ENCODE measurements at regions of chr13 and their contacts with region 1.

Region 1: GRCh38 chr13:33723772-33724435 is 94.0 kb upstream of the RFC3 start:
- DNase-seq: peak; percentile 84
- H3K4me3 ChIP-seq: no peak overlapping the region
- H3K27ac ChIP-seq: peak overlapping the region; percentile 30 to 32
- H3K4me1 ChIP-seq: no peaks in the 10 kb centered on the region
- H3K27me3 ChIP-seq: no peaks in the 10 kb centered on the region
- CTCF ChIP-seq: peak; percentile 46 to 82 (median 72)
- POLR2A ChIP-seq: no peak

Region 2: GRCh38 chr13:32586080-32586900 is 1137.6 kb before region 1 on chr13 and contains the start of gene PDS5B:
- intact Hi-C with region 1: loop called (anchors 5 kb)
- DNase-seq: peak; percentile 95
- H3K4me3 ChIP-seq: peak within 1 kb of the TSS; percentile 76 to 85
- H3K27ac ChIP-seq: peak within 1 kb of the TSS; percentile 95 to 97
- H3K4me1 ChIP-seq: no peaks in the 10 kb centered on the region
- H3K27me3 ChIP-seq: no peaks in the 10 kb centered on the region
- CTCF ChIP-seq: peak; percentile 95 to 99 (median 98)
- POLR2A ChIP-seq: peak; percentile 66
- total RNA-seq, gene PDS5B: 37.0 to 63.3 TPM

Region 3: DNA sequence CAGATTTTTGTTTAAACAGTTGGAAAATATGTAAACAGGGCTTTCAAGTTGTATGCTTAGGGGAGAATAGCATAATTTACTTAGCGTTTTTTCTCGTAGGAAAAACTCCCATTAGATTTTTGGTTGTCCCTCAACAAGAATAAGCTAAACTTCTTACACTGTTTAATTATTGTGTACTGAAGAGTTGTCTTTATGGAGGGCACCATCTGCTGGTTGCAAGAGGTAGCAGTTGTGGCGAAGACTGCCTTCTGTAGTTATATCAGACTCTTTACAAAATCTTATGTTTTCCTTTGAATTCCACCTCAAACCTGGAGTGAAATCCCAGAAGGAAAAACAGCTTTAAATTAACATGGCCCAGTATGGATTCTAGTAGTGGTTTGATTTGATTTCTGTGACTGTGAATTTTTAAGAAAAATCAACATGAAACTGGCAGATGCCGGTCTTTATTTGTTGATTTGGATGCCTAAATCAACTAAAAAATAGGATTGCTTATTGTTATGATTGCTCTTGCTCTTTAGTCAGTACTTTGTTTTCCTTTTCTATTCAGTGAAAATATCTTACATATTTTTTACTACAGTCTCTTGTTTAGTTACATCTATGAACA is 1084.3 kb before region 1 on chr13:
- intact Hi-C with region 1: loop called (anchors 10 kb)
- DNase-seq: peak; percentile 55
- H3K4me3 ChIP-seq: no peak overlapping the region
- H3K27ac ChIP-seq: no peak overlapping the region
- H3K4me1 ChIP-seq: no peaks in the 10 kb centered on the region
- H3K27me3 ChIP-seq: no peaks in the 10 kb centered on the region
- CTCF ChIP-seq: peak in 3 of 4 experiments; percentile 70 to 74 (median 72)
- POLR2A ChIP-seq: no peak

Region 4: DNA sequence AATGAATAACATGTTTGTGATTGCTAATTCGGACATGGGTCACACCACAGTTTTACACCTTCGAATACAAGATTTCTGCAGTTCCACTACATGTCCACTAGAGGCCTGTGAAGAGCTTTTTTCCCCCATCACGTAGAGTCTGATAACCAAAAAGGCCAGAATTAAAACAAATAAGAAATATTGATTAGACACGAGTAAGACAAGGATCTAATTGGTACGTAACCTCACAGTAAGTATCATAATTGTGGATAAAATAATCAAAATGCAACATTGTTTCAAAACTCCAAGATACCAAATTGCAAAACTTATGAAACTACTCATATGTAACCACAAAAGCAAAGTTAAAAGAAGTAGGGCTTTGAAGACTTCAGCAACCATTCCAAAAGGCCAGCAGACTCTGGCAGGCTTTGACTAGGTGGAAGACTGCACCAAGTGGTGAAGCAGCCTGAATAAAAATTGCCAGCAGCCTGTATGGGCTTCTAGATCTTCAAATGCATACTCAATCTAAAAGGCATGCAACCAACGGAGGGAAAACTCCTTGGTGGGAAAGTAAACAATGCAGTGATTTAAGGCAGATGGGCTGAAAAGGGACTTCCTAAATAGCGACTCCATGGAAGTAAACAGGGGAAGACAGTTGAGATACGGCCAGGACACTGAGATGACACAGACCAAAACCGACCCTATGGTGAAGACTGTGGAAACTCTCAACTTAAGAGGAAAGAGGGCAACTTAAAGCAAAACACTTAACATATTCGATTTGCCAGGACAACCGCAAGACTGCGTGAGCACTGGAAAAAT is 495.1 kb before region 1 on chr13:
- intact Hi-C with region 1: loop called (anchors 5 kb)
- DNase-seq: no peak
- H3K4me3 ChIP-seq: no peak overlapping the region
- H3K27ac ChIP-seq: peak overlapping the region; percentile 49 to 66
- H3K4me1 ChIP-seq: peaks cover 6% of the 10 kb centered on the region
- H3K27me3 ChIP-seq: no peaks in the 10 kb centered on the region
- CTCF ChIP-seq: peak; percentile 71 to 83 (median 80)
- POLR2A ChIP-seq: no peak

Region 5: GRCh38 chr13:33285420-33286124 is 438.3 kb before region 1 on chr13 and contains the start of gene STARD13:
- intact Hi-C with region 1: loop called (anchors 10 kb)
- DNase-seq: peak; percentile 94
- H3K4me3 ChIP-seq: peak within 1 kb of the TSS; percentile 52 to 60
- H3K27ac ChIP-seq: peak within 1 kb of the TSS; percentile 89 to 91
- H3K4me1 ChIP-seq: no peaks in the 10 kb centered on the region
- H3K27me3 ChIP-seq: no peaks in the 10 kb centered on the region
- CTCF ChIP-seq: peak in 3 of 4 experiments; percentile 16 to 72 (median 59)
- POLR2A ChIP-seq: peak; percentile 82
- total RNA-seq, gene STARD13: 27.4 to 31.1 TPM

Region 6: DNA sequence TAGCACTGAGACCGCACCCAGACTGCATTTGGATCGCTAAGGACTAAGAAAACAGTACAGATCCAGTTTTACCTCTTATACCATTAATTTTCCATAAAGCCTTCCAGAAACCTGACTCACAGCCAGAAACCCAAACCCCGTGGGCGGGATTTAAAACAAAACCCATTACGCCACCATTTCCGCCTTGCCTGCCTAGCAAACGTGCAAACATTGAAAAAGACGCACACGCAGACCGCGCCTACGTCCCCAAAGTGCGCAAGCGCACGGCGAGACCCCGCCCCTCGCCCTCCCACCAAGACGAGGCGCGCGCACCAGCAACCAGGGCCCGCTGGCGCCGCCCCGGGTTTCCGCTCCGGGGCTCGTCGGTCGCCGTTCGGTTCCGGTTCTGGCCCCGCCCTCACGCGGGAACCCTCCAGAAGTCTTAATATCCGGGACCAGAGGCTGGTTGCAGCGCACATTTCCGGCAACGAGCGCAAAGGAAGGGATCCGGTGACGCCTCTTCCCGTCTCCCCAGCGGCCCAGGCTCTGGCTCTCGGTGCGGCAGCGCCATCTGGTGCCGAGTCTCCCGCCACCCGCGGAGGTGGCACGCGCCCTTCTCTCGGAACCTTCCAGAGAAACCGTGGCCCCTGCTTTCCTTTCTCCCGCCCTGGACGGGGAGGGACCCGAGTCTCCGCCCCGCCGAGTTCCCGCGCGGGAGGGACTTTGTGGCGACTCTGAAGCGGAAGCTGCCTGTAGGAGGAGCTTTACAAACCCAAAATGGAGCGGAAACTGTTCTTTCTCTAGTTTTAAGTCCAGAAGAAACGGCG is 181.4 kb before region 1 on chr13:
- intact Hi-C with region 1: loop called (anchors 5 kb)
- DNase-seq: peak; percentile 98
- H3K4me3 ChIP-seq: peak overlapping the region; percentile 30 to 48
- H3K27ac ChIP-seq: peak overlapping the region; percentile 96 to 99
- H3K4me1 ChIP-seq: peaks cover 3% of the 10 kb centered on the region
- H3K27me3 ChIP-seq: no peaks in the 10 kb centered on the region
- CTCF ChIP-seq: peak; percentile 85 to 99 (median 98)
- POLR2A ChIP-seq: peak; percentile 73

Region 7: GRCh38 chr13:33992853-33993336 is 269.0 kb after region 1 on chr13:
- intact Hi-C with region 1: no loop called
- DNase-seq: no peak
- H3K4me3 ChIP-seq: no peak overlapping the region
- H3K27ac ChIP-seq: no peak overlapping the region
- H3K4me1 ChIP-seq: no peaks in the 10 kb centered on the region
- H3K27me3 ChIP-seq: no peaks in the 10 kb centered on the region
- CTCF ChIP-seq: no peak
- POLR2A ChIP-seq: no peak